ENCODE measurements at regions of chr13 and their contacts with region 1.

Region 1: DNA sequence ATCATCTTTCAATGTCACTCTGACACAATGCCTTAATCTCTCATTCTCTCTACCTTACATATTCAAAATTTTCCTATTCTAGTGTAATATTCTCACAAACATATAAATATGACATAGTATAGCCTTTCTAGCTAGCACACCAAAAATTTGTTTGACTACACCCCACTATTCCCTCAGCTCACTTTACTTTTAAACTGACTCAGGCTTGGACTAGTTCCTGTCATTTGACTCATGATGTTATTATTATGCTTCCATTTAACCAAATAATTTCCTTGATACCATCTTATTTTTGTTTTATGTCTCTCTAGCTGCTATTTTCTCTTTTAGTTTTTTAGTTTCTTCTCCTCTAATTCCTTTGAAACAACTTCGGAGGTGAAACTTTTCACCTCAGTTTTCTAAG is 1745.6 kb upstream of the PCDH20 start:
- DNase-seq: no peak
- H3K4me3 ChIP-seq: no peak overlapping the region
- H3K27ac ChIP-seq: no peak overlapping the region
- H3K4me1 ChIP-seq: no peaks in the 10 kb centered on the region
- CTCF ChIP-seq: no peak

Region 2: GRCh38 chr13:63120883-63121282 is 40.3 kb before region 1 on chr13:
- CTCF ChIA-PET with region 1: no interaction called
- POLR2A ChIA-PET with region 1: no interaction called
- intact Hi-C with region 1: loop called (anchors 1 kb)
- DNase-seq: no peak
- H3K4me3 ChIP-seq: no peak overlapping the region
- H3K27ac ChIP-seq: no peak overlapping the region
- H3K4me1 ChIP-seq: no peaks in the 10 kb centered on the region
- CTCF ChIP-seq: no peak

Region 3: GRCh38 chr13:63139277-63139676 is 21.9 kb before region 1 on chr13:
- CTCF ChIA-PET with region 1: no interaction called
- POLR2A ChIA-PET with region 1: no interaction called
- intact Hi-C with region 1: no loop called
- DNase-seq: no peak
- H3K4me3 ChIP-seq: no peak overlapping the region
- H3K27ac ChIP-seq: no peak overlapping the region
- H3K4me1 ChIP-seq: no peaks in the 10 kb centered on the region
- CTCF ChIP-seq: no peak

Measured in OCI-LY7 (cell line).